ENCODE measurements at regions of chrX and their contacts with region 1.

Region 1: DNA sequence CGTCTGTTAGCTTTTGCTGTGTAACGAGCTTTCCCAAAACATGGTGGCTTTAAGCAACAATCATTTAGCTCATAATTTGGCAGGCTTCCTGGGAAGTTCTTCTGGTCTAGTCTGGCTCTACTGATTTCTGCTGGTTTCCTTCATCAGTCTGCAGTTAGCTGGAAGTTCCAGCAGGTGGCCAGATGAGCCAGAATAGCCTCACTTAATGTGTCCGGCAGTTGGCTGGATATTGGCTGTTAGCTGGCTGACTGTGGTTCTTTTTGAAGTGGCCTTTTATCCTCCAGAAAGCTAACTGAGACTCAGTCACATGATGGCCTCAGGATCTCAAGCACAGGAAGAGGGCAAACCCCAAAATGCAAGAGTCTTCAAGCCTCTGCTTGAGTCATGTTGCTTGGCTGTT is 34.9 kb downstream of the FTHL17 start:
- DNase-seq: peak; percentile 42
- CTCF ChIP-seq: peak; percentile 75

Region 2: DNA sequence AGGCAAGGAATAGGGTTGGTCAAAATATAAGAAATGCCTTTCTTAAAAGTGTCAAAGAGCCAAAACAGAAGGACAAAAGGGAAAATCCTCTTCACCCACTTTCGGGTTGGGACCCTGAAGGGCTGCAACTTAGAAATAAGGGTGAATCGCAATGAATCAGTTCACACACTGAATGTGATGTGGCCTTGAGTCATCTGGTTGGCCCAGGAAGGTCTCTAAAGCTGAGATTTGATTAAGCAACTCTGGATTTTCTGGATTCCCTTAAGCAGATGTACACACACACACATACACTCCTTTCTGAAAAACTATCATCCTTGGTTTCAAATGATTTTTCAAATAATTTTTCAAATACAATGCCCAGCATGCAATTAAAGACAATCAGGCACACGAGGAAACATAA is 160.9 kb before region 1 on chrX:
- in situ Hi-C with region 1: no loop called
- DNase-seq: no peak
- CTCF ChIP-seq: no peak

Region 3: GRCh38 chrX:31213941-31214340 is 177.0 kb after region 1 on chrX:
- in situ Hi-C with region 1: loop called (anchors 10 kb)
- DNase-seq: peak; percentile 28
- CTCF ChIP-seq: peak; percentile 66

Region 4: DNA sequence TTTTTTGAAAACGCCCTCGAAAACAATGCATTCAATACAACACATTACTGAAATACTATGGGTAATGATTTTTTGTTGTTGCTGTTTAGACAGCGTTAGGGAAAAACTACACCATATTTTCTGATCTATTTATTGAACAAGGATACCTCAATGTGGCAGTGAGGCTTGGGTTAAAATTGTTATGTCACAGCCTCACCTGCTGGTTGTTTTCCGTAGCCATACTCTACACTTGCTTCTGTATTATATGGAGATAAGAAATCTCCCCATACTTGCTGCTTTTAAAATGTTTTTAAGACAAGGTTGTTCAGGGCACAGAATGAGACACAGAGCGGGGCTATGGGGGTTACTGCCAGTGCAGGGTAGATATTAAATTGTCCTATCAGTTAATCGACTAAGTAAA is 256.5 kb after region 1 on chrX:
- in situ Hi-C with region 1: loop called (anchors 10 kb)
- DNase-seq: peak; percentile 8
- CTCF ChIP-seq: peak; percentile 53